Mammary epithelial cell (primary cell): ENCODE measurements at regions of chr17 and their contacts with region 1.

Region 1: GRCh38 chr17:72592242-72592966 is 471.6 kb downstream of the SOX9 start:
- DNase-seq: peak; percentile 81
- H3K4me3 ChIP-seq: peak overlapping the region; percentile 79 to 93 (median 83)
- H3K27ac ChIP-seq: peak overlapping the region; percentile 98
- H3K4me1 ChIP-seq: peaks cover 20% of the 10 kb centered on the region
- H3K27me3 ChIP-seq: no peaks in the 10 kb centered on the region
- CTCF ChIP-seq: no peak

Region 2: GRCh38 chr17:72236915-72237633 is 355.3 kb before region 1 on chr17:
- CTCF ChIA-PET with region 1: no interaction called
- dilution Hi-C with region 1: no loop called
- in situ Hi-C with region 1: no loop called
- intact Hi-C with region 1: no loop called
- DNase-seq: no peak
- H3K4me3 ChIP-seq: no peak overlapping the region
- H3K27ac ChIP-seq: no peak overlapping the region
- H3K4me1 ChIP-seq: no peaks in the 10 kb centered on the region
- H3K27me3 ChIP-seq: no peaks in the 10 kb centered on the region
- CTCF ChIP-seq: no peak

Region 3: GRCh38 chr17:72556944-72557826 is 35.2 kb before region 1 on chr17:
- CTCF ChIA-PET with region 1: interaction called, 4 read pairs
- dilution Hi-C with region 1: no loop called
- in situ Hi-C with region 1: no loop called
- intact Hi-C with region 1: loop called (anchors 1 kb)
- DNase-seq: peak; percentile 67
- H3K4me3 ChIP-seq: no peak overlapping the region
- H3K27ac ChIP-seq: no peak overlapping the region
- H3K4me1 ChIP-seq: peaks cover 23% of the 10 kb centered on the region
- H3K27me3 ChIP-seq: no peaks in the 10 kb centered on the region
- CTCF ChIP-seq: peak; percentile 80 to 88

Region 4: DNA sequence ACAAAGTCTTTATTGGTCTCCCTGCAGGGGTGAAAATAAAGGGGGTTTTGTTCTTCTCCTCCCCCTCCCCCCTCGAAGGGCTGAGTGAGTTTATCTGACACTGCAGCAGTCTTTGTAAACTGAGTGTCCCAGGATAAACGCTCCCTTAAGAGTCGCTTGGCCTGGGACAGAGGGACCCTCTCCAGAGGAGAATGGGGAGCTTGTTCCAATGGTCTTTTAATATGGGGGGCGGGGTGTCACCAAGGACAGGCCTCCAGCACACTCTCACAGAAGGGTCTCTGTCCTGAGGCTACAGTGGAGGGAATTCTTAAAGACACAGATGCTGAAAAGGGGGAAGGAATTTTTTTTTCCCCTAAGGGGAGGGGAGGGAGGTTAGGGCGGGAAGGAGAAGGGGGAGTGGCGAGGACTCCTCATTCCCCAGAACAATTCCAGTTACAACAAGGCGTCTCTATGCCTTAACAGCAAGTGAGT is 16.1 kb before region 1 on chr17:
- CTCF ChIA-PET with region 1: no interaction called
- dilution Hi-C with region 1: no loop called
- in situ Hi-C with region 1: no loop called
- intact Hi-C with region 1: no loop called
- DNase-seq: no peak
- H3K4me3 ChIP-seq: no peak overlapping the region
- H3K27ac ChIP-seq: no peak overlapping the region
- H3K4me1 ChIP-seq: peaks cover 36% of the 10 kb centered on the region
- H3K27me3 ChIP-seq: no peaks in the 10 kb centered on the region
- CTCF ChIP-seq: no peak

Region 5: DNA sequence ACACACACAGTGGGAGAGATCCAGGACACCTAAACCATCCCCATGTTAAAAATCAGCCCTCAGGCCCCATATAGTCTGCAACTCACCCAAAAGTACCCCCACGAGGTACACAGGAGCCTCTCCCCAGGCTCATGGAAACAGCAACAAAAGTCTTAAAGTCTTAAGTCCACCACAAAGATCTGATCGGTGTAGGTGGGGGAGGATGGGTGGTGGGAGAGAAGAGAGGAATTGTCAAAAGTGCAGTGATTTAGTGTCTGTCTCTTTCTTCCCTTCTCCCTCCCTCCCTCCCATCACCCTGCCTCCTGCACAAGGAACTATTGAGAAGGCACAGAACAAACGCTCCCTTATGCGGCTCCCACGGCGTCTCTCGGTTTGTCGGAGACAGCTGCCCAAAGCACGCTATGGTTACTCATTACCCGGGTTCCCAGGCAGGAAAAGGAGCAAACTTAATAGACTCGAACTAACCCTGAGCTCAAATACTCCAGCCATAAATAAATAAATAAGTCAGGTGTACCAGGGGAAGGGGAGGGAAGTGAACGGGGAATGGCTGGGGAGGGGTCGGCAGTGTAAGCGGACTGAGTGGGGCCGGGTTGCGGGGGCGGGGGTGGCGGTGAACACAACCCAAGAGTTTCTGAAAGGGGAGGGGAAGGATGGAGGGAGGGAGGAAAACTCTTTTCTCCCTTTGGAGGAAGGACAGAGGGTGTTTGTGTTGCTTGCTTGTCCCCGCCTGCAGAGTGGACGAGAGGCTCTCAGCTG is 22.6 kb after region 1 on chr17:
- CTCF ChIA-PET with region 1: no interaction called
- dilution Hi-C with region 1: no loop called
- in situ Hi-C with region 1: no loop called
- intact Hi-C with region 1: loop called (anchors 1 kb)
- DNase-seq: peak; percentile 94
- H3K4me3 ChIP-seq: no peak overlapping the region
- H3K27ac ChIP-seq: peak overlapping the region; percentile 97
- H3K4me1 ChIP-seq: peaks cover 32% of the 10 kb centered on the region
- H3K27me3 ChIP-seq: no peaks in the 10 kb centered on the region
- CTCF ChIP-seq: no peak

Region 6: GRCh38 chr17:72631949-72632684 is 39.7 kb after region 1 on chr17:
- CTCF ChIA-PET with region 1: no interaction called
- dilution Hi-C with region 1: loop called (anchors 10 kb)
- in situ Hi-C with region 1: no loop called
- intact Hi-C with region 1: no loop called
- DNase-seq: no peak
- H3K4me3 ChIP-seq: no peak overlapping the region
- H3K27ac ChIP-seq: no peak overlapping the region
- H3K4me1 ChIP-seq: peaks cover 30% of the 10 kb centered on the region
- H3K27me3 ChIP-seq: no peaks in the 10 kb centered on the region
- CTCF ChIP-seq: no peak

Region 7: DNA sequence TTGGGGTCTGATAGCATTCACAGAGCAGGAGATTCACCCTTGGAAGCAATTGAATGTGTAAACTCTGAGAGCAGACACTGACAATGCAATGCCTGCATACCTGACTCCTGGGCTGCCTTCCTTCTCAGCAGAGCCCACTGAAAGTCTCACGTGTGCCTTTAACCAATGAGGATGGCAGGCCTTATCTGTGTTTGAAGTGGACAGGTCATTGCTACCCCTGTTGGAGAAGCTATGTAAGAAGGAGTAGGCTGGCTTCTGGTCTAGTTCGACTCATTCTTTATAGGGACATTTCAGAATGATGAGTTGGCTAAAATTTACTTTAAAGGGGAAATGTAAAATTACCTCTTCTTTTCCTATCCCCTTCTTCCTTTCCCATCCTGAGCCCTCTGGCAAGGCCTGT is 53.8 kb after region 1 on chr17:
- CTCF ChIA-PET with region 1: no interaction called
- dilution Hi-C with region 1: no loop called
- in situ Hi-C with region 1: no loop called
- intact Hi-C with region 1: no loop called
- DNase-seq: no peak
- H3K4me3 ChIP-seq: no peak overlapping the region
- H3K27ac ChIP-seq: no peak overlapping the region
- H3K4me1 ChIP-seq: no peaks in the 10 kb centered on the region
- H3K27me3 ChIP-seq: no peaks in the 10 kb centered on the region
- CTCF ChIP-seq: no peak

Region 8: GRCh38 chr17:72677714-72678390 is 85.4 kb after region 1 on chr17:
- CTCF ChIA-PET with region 1: no interaction called
- dilution Hi-C with region 1: loop called (anchors 10 kb)
- in situ Hi-C with region 1: no loop called
- intact Hi-C with region 1: loop called (anchors 1 kb)
- DNase-seq: no peak
- H3K4me3 ChIP-seq: no peak overlapping the region
- H3K27ac ChIP-seq: no peak overlapping the region
- H3K4me1 ChIP-seq: peaks cover 11% of the 10 kb centered on the region
- H3K27me3 ChIP-seq: no peaks in the 10 kb centered on the region
- CTCF ChIP-seq: no peak

Region 9: GRCh38 chr17:72715906-72716572 is 123.6 kb after region 1 on chr17:
- CTCF ChIA-PET with region 1: no interaction called
- dilution Hi-C with region 1: no loop called
- in situ Hi-C with region 1: loop called in 1 of 2 experiments (anchors 10 kb)
- intact Hi-C with region 1: loop called (anchors 2 kb)
- DNase-seq: peak; percentile 96
- H3K4me3 ChIP-seq: no peak overlapping the region
- H3K27ac ChIP-seq: peak overlapping the region; percentile 87
- H3K4me1 ChIP-seq: peaks cover 25% of the 10 kb centered on the region
- H3K27me3 ChIP-seq: no peaks in the 10 kb centered on the region
- CTCF ChIP-seq: no peak

Region 10: GRCh38 chr17:73304971-73305812 is 712.8 kb after region 1 on chr17:
- CTCF ChIA-PET with region 1: no interaction called
- dilution Hi-C with region 1: no loop called
- in situ Hi-C with region 1: no loop called
- intact Hi-C with region 1: loop called (anchors 10 kb)
- DNase-seq: peak; percentile 69
- H3K4me3 ChIP-seq: peak overlapping the region; percentile 22 to 51 (median 32)
- H3K27ac ChIP-seq: peak overlapping the region; percentile 71
- H3K4me1 ChIP-seq: peaks cover 52% of the 10 kb centered on the region
- H3K27me3 ChIP-seq: no peaks in the 10 kb centered on the region
- CTCF ChIP-seq: peak in 1 of 2 donors; percentile 34